Kidney (tissue), 22 donors: ENCODE measurements at regions of chr2 and their contacts with region 1.

Region 1: DNA sequence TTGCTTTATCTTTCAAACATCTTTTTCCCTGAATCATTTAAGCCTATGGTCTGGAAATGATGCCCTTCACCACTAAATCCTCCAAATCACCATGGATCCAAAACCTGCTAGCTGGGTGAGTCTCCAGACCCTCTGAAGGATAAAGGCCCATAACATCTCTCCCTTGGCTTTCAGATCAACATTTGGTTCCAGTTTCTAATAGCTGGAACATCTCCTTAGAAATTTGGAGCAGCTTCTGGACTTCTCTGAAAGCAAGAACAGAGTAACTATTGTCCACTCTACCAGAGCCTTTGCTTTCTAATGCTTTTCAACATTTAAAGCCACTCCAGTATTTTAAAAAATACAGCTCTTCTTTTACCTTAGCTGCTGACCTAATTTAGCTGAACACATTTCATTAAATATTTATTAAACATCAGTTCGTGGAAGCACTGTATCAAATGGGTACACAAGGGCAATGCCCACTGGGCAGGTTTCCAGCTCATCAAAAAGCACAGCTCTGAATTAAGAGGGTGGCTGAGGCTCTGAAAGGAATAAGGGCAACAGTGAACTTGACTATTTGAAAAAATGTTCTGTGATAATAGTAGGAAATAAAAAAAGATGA is 75.3 kb downstream of the GALNT3 start:
- DNase-seq: no peak
- H3K4me3 ChIP-seq: no peak overlapping the region
- H3K27ac ChIP-seq: no peak overlapping the region
- H3K4me1 ChIP-seq: no peaks in the 10 kb centered on the region
- H3K27me3 ChIP-seq: no peaks in the 10 kb centered on the region
- CTCF ChIP-seq: no peak

Region 2: GRCh38 chr2:165328272-165328671 is 390.4 kb before region 1 on chr2:
- intact Hi-C with region 1: loop called (anchors 10 kb)
- DNase-seq: no peak
- H3K4me3 ChIP-seq: no peak overlapping the region
- H3K27ac ChIP-seq: no peak overlapping the region
- H3K4me1 ChIP-seq: no peaks in the 10 kb centered on the region
- H3K27me3 ChIP-seq: no peaks in the 10 kb centered on the region
- CTCF ChIP-seq: no peak

Region 3: DNA sequence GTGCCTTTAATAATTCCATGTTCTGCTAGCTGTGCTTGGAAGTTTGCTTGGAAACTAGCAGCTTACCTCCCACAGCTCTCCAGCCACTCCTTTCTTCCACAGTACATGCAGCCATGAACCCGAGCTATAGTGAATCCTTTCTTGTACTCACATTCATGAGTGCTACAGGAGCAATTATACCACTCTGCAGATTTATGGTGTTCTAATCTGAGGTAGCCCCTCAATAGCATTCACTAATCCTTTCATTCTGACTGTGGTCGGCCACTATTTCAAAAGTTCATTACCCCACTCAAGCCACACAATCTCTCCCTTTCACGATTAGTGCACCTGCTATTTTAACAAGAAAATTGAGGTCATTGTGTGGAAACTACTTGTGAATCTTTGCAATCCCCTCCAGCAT is 196.0 kb before region 1 on chr2:
- intact Hi-C with region 1: no loop called
- DNase-seq: no peak
- H3K4me3 ChIP-seq: no peak overlapping the region
- H3K27ac ChIP-seq: no peak overlapping the region
- H3K4me1 ChIP-seq: no peaks in the 10 kb centered on the region
- H3K27me3 ChIP-seq: no peaks in the 10 kb centered on the region
- CTCF ChIP-seq: no peak